Tibial artery (tissue), 4 donors: ENCODE measurements at regions of chr17 and their contacts with region 1.

Region 1: GRCh38 chr17:79991140-79991923 is 44.3 kb downstream of the TBC1D16 start:
- DNase-seq: peak in 1 of 2 donors; percentile 79
- H3K4me3 ChIP-seq: peak overlapping the region in 1 of 2 donors; percentile 44
- H3K27ac ChIP-seq: no peak overlapping the region
- H3K4me1 ChIP-seq: peaks cover 0 to 50% (median 22%) of the 10 kb centered on the region in 4 donors
- H3K27me3 ChIP-seq: peaks cover 0 to 26% of the 10 kb centered on the region in 2 donors
- CTCF ChIP-seq: peak; percentile 5 to 69

Region 2: GRCh38 chr17:79749156-79749815 is 242.0 kb before region 1 on chr17:
- intact Hi-C with region 1: loop called (anchors 5 kb)
- DNase-seq: no peak
- H3K4me3 ChIP-seq: no peak overlapping the region
- H3K27ac ChIP-seq: no peak overlapping the region
- H3K4me1 ChIP-seq: peaks cover 0 to 17% (median 8%) of the 10 kb centered on the region in 4 donors
- H3K27me3 ChIP-seq: peaks cover 0 to 88% of the 10 kb centered on the region in 2 donors
- CTCF ChIP-seq: no peak

Region 3: GRCh38 chr17:79789534-79790353 is 201.6 kb before region 1 on chr17:
- intact Hi-C with region 1: loop called (anchors 2 kb)
- DNase-seq: no peak
- H3K4me3 ChIP-seq: no peak overlapping the region
- H3K27ac ChIP-seq: no peak overlapping the region
- H3K4me1 ChIP-seq: peaks cover 0 to 49% (median 34%) of the 10 kb centered on the region in 4 donors
- H3K27me3 ChIP-seq: peaks cover 20 to 97% of the 10 kb centered on the region in 2 donors
- CTCF ChIP-seq: peak; percentile 65 to 76

Region 4: DNA sequence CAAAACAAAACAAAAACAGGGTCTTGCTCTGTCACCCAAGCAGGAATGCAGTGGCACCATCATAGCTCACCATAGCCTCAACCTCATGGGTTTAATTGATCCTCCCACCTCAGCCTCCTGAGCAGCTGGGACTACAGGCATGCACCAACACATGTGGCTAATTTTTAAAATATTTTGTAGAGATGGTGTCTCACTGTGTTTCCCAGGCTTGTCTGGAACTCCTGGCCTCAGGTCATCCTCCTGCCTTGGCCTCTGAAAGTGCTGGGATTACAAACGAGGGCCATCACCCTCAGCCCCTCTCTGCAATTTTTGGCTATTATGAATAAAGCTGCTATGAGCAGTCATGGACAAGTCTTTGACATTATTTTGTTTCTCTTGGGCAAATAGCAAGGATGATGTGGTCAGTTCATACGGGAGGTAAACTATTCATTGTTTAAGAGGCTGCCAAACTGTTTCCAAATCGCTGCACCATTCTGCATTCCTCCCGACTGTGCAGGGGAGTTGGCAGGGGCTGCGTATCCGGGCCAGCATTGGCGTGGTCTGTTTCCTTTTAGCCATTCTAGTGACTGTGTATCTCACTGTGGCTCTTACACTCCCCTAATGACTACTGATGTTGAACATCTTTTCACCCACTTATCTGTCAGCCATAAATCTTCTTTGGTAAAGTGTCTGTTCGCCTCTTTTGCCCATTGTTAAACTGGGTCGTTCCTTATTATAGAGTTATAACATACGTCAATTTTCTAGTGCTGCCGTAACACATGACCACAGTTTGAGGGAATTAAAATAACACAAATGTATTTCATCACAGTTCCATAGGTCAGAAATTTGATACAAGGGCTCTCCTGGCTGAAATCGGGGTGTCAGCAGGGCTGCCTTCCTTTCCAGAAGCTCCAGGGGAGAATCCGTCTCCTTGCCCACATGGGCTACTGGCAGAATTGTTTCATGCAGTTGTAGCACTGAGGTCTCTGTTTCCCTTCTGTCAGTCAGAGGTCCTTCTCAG is 134.7 kb after region 1 on chr17:
- intact Hi-C with region 1: no loop called
- DNase-seq: no peak
- H3K4me3 ChIP-seq: no peak overlapping the region
- H3K27ac ChIP-seq: no peak overlapping the region
- H3K4me1 ChIP-seq: peaks cover 0 to 7% (median 0%) of the 10 kb centered on the region in 4 donors
- H3K27me3 ChIP-seq: peaks cover 0 to 23% of the 10 kb centered on the region in 2 donors
- CTCF ChIP-seq: no peak